GM12878 (cell line): ENCODE measurements at regions of chr2 and their contacts with region 1.

Region 1: GRCh38 chr2:206989306-206989705 is 50.0 kb downstream of the CPO start:
- DNase-seq: no peak
- ATAC-seq: peak; percentile 99
- H3K4me3 ChIP-seq: no peak overlapping the region
- H3K27ac ChIP-seq: no peak overlapping the region
- H3K4me1 ChIP-seq: no peaks in the 10 kb centered on the region
- H3K27me3 ChIP-seq: no peaks in the 10 kb centered on the region
- CTCF ChIP-seq: peak; percentile 72 to 90 (median 86)
- EP300 ChIP-seq: no peak
- POLR2A ChIP-seq: no peak
- RAD21 ChIP-seq: peak; percentile 53

Region 2: GRCh38 chr2:206693399-206694137 is 295.7 kb before region 1 on chr2:
- CTCF ChIA-PET with region 1: interaction called, 8 read pairs
- POLR2A ChIA-PET with region 1: no interaction called
- RAD21 ChIA-PET with region 1: no interaction called
- SMC1A ChIA-PET with region 1: no interaction called
- in situ Hi-C with region 1: no loop called
- intact Hi-C with region 1: loop called (anchors 5 kb)
- DNase-seq: peak; percentile 24
- ATAC-seq: peak; percentile 84
- H3K4me3 ChIP-seq: no peak overlapping the region
- H3K27ac ChIP-seq: no peak overlapping the region
- H3K4me1 ChIP-seq: no peaks in the 10 kb centered on the region
- H3K27me3 ChIP-seq: no peaks in the 10 kb centered on the region
- CTCF ChIP-seq: peak; percentile 41 to 77 (median 61); a peak in 5 of 6 replicates
- EP300 ChIP-seq: no peak
- POLR2A ChIP-seq: no peak
- RAD21 ChIP-seq: peak; percentile 94